A673 (cell line): ENCODE measurements at regions of chr1 and their contacts with region 1.

Region 1: GRCh38 chr1:26083246-26083645 is 15.8 kb upstream of the TRIM63 start:
- DNase-seq: no peak
- H3K4me3 ChIP-seq: no peak overlapping the region
- H3K27ac ChIP-seq: no peak overlapping the region
- H3K4me1 ChIP-seq: no peaks in the 10 kb centered on the region
- H3K27me3 ChIP-seq: peaks cover 9% of the 10 kb centered on the region
- CTCF ChIP-seq: no peak

Region 2: GRCh38 chr1:25922056-25922969 is 160.9 kb before region 1 on chr1:
- CTCF ChIA-PET with region 1: no interaction called
- POLR2A ChIA-PET with region 1: no interaction called
- intact Hi-C with region 1: no loop called
- DNase-seq: peak; percentile 70
- H3K4me3 ChIP-seq: peak overlapping the region; percentile 52
- H3K27ac ChIP-seq: peak overlapping the region; percentile 27
- H3K4me1 ChIP-seq: peaks cover 10% of the 10 kb centered on the region
- H3K27me3 ChIP-seq: no peaks in the 10 kb centered on the region
- CTCF ChIP-seq: no peak

Region 3: DNA sequence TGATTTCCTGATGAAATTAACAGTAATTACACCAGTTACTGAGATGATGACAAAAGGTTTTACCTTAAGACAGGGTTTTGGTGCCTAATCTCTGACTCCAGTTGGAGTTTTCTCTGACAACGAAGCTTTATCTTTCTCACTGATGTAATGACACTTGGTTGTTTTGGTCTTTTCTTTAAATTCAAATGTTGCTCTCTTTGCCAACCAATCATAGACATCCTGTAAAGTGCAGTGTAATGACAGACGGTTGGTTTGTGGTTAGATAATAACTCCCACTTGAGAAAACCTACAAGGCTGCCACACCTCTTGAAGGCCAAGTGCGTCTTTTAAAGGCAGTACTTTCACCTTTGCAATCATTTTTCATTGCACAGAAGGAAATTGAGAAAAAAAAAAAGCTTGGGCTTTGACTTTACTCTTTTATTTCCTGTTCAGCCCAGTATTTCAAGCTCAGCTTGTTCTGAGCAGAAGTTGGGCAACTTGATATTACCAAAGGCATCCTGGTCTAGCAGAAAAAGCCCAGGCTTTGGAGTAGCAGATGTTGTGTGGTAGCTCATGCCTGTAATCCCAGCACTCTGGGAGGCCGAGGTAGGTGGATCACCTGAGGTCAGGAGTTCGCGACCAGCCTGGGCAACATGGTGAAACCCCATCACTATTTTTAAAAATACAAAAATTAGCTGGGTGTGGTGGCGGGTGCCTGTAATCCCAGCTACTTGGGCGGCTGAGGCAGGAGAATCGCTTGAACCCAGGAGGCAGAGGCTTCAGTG is 43.3 kb after region 1 on chr1:
- CTCF ChIA-PET with region 1: no interaction called
- POLR2A ChIA-PET with region 1: interaction called, 24 read pairs
- intact Hi-C with region 1: no loop called
- DNase-seq: peak; percentile 42
- H3K4me3 ChIP-seq: no peak overlapping the region
- H3K27ac ChIP-seq: peak overlapping the region; percentile 19
- H3K4me1 ChIP-seq: peaks cover 8% of the 10 kb centered on the region
- H3K27me3 ChIP-seq: no peaks in the 10 kb centered on the region
- CTCF ChIP-seq: no peak

Region 4: GRCh38 chr1:27234049-27234882 is 1151.0 kb after region 1 on chr1 and contains the start of gene WDTC1:
- CTCF ChIA-PET with region 1: no interaction called
- POLR2A ChIA-PET with region 1: interaction called, 10 read pairs
- intact Hi-C with region 1: no loop called
- DNase-seq: peak; percentile 99
- H3K4me3 ChIP-seq: peak within 1 kb of the TSS; percentile 88
- H3K27ac ChIP-seq: peak within 1 kb of the TSS; percentile 61
- H3K4me1 ChIP-seq: peaks cover 7% of the 10 kb centered on the region
- H3K27me3 ChIP-seq: no peaks in the 10 kb centered on the region
- CTCF ChIP-seq: no peak
- total RNA-seq, gene WDTC1: 20.9 and 25.8 TPM in 2 replicates